Tibial artery (tissue), 4 donors: ENCODE measurements at regions of chr14 and their contacts with region 1.

Region 1: DNA sequence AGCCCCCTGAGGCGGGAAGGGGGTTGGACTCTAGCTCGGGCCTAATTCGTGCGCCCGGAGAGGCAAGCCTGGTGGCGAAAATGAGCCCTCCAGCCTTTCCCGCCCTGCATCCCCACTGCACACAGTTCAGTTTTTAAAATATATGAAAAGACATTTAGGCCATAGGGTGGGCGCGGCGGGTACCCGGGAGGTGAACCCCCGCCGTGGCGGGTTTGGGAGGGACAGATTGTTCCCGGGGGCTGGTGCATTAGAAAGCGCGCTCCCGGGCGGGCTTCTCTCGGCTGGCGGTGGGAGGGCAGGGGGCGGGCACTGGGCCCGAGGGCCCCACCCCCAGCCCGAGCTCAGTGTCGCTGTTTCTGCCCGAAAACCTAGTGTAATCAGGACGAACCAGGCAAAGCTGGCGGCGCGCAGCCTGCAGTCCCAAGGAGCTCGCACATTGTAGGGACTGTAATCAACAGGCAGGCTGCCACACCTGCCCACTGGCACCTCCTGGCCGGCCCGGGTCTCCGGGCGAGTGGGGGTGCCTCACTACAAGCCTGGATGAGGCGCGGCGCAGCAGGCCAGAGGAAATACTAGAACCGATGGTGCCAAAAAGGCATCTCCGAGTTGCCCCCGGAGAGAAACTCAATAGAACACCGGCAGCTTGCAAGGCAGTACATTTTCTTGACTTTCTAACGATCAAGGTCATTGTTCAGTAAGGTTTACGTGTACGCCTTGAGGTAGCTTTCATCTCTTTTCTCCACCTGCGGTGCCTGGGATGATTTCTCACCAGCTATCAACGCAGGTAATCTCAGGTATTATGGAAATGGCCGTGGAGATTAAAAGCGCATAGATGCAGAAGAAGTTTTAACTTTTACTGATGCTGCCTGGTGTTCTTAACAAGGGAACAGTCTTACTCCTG is 764 bp upstream of the SPTB start:
- DNase-seq: peak; percentile 28 to 70
- H3K4me3 ChIP-seq: peak overlapping the region; percentile 60 to 65
- H3K27ac ChIP-seq: peak overlapping the region; percentile 38
- H3K4me1 ChIP-seq: peaks cover 0 to 23% (median 16%) of the 10 kb centered on the region in 4 donors
- H3K27me3 ChIP-seq: peaks cover 0 to 13% of the 10 kb centered on the region in 2 donors
- CTCF ChIP-seq: no peak

Region 2: DNA sequence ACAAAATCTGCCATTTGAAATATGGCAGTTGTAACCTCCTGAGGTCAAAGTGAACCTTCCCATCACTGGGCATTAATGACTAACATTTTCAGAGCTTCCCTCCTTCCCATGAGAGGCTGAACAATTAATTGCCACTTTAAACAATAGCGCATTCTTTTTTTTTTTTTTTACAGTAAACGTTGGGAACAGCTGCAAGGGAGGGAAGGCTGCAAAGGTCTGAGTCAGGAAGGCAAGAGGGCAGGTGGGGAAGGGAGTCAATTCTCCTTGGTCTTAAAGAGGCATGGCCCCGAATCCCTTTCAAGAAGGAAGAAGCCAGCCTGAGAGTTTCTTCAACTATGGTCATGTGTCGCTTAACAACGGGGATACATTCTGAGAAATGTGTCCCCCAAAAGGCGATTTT is 217.3 kb before region 1 on chr14:
- intact Hi-C with region 1: loop called (anchors 10 kb)
- DNase-seq: no peak
- H3K4me3 ChIP-seq: no peak overlapping the region
- H3K27ac ChIP-seq: no peak overlapping the region
- H3K4me1 ChIP-seq: no peaks in the 10 kb centered on the region
- H3K27me3 ChIP-seq: no peaks in the 10 kb centered on the region
- CTCF ChIP-seq: no peak